Activated naive CD4-positive, alpha-beta T cell treated with anti-CD3 and anti-CD28 coated beads for 36 hours (primary cell): ENCODE measurements at regions of chr11 and their contacts with region 1.

Region 1: DNA sequence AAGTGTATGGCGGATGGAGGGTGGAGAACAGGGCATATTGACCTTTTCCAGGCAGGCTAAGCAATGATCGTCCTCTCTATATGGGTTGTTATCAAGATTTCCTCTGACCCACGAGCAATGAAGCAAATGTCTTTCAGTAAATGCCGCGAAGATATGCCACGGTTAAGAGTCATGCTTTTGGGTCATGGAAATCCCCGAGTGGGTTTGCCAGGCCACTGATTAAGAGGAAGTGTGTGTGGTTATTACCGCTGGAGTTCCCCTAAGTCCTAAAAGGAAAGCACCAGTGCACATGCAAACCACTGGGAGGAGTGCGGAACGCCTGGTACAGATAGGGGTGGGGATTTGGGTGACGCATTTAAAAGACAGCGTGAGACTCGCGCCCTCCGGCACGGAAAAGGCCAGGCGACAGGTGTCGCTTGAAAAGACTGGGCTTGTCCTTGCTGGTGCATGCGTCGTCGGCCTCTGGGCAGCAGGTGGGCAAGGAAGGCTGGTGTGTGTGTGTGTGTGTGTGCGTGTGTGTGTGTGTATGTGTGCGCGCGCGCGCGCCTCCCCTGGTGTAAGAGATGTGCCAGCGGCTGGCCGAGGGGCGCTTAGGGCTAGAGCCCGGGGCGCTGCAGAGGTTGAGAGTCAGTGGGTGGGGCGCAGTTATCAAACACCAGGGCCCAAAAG is at the start of gene BIRC3:
- DNase-seq: peak; percentile 97
- H3K4me3 Mint-ChIP-seq: peak within 1 kb of the TSS; percentile 96
- H3K27ac Mint-ChIP-seq: peak within 1 kb of the TSS; percentile 98
- H3K4me1 Mint-ChIP-seq: peaks cover 66% of the 10 kb centered on the region
- H3K27me3 Mint-ChIP-seq: no peaks in the 10 kb centered on the region
- total RNA-seq, gene BIRC3: 100 to 105 TPM

Region 2: DNA sequence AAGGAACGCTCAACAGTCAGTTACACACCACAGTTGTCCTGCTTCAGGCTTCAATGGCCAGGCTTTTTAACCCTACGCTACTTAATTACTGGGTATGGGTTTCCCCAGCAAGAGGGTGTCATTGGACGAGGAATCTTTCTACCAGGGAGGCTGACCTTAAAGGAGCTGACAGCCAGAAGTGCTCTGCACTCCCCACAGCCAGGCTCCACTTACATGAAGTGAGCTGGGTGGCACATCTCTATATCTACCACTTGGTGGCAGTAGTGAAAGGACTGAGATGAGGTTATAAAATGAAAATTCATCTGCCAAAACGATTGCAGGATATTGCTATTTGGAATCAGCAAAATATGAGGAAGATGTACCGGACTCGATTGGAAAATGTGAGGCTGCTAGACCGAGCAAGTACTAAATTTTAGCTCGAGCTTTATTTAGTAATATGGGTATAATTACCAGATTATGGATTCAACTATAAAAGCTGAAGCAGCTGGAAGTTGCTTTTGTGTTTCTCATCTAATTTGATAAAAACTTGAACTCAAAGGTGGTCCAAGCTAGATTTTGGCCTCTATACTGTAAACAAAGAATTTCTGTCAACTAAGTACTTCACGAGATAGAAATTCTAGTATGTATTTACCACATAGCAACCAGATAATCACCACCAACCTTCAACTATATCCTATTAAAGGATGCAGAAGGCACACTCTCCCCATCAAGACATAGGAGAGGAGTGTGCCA is 456.4 kb before region 1 on chr11:
- CTCF ChIA-PET with region 1: no interaction called
- intact Hi-C with region 1: no loop called
- DNase-seq: peak; percentile 37
- H3K4me3 Mint-ChIP-seq: no peak overlapping the region
- H3K27ac Mint-ChIP-seq: no peak overlapping the region
- H3K4me1 Mint-ChIP-seq: no peaks in the 10 kb centered on the region
- H3K27me3 Mint-ChIP-seq: peaks cover 8% of the 10 kb centered on the region

Region 3: DNA sequence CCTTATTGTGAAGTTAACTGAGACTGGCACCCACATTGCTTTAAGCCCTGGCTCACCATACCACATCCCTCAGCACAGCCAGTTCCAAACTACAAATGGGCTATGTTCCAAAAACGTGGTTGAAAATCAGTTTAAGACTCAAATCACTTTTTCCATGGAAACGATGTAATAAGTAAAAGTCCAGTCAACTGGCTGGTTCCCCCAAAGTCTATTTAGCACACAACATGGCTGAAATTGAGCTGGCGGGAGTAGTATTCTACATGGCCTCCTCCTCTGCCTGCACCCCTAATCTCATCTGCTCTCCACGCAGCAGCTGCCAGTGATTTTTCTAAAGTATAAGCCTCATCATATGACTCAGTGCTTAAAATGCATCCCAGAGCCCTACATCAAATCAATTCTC is 40.9 kb before region 1 on chr11:
- CTCF ChIA-PET with region 1: no interaction called
- intact Hi-C with region 1: no loop called
- DNase-seq: no peak
- H3K4me3 Mint-ChIP-seq: no peak overlapping the region
- H3K27ac Mint-ChIP-seq: no peak overlapping the region
- H3K4me1 Mint-ChIP-seq: peaks cover 10% of the 10 kb centered on the region
- H3K27me3 Mint-ChIP-seq: peaks cover 6% of the 10 kb centered on the region

Region 4: GRCh38 chr11:102293873-102294601 is 23.2 kb before region 1 on chr11:
- CTCF ChIA-PET with region 1: interaction called, 180 read pairs
- intact Hi-C with region 1: loop called (anchors 1 kb)
- DNase-seq: peak; percentile 35
- H3K4me3 Mint-ChIP-seq: peak overlapping the region; percentile 74
- H3K27ac Mint-ChIP-seq: peak overlapping the region; percentile 85
- H3K4me1 Mint-ChIP-seq: peaks cover 21% of the 10 kb centered on the region
- H3K27me3 Mint-ChIP-seq: no peaks in the 10 kb centered on the region

Region 5: GRCh38 chr11:102306048-102306585 is 11.1 kb before region 1 on chr11:
- CTCF ChIA-PET with region 1: interaction called, 180 read pairs
- intact Hi-C with region 1: loop called (anchors 1 kb)
- DNase-seq: peak; percentile 37
- H3K4me3 Mint-ChIP-seq: peak overlapping the region; percentile 36
- H3K27ac Mint-ChIP-seq: peak overlapping the region; percentile 74
- H3K4me1 Mint-ChIP-seq: peaks cover 59% of the 10 kb centered on the region
- H3K27me3 Mint-ChIP-seq: no peaks in the 10 kb centered on the region

Region 6: DNA sequence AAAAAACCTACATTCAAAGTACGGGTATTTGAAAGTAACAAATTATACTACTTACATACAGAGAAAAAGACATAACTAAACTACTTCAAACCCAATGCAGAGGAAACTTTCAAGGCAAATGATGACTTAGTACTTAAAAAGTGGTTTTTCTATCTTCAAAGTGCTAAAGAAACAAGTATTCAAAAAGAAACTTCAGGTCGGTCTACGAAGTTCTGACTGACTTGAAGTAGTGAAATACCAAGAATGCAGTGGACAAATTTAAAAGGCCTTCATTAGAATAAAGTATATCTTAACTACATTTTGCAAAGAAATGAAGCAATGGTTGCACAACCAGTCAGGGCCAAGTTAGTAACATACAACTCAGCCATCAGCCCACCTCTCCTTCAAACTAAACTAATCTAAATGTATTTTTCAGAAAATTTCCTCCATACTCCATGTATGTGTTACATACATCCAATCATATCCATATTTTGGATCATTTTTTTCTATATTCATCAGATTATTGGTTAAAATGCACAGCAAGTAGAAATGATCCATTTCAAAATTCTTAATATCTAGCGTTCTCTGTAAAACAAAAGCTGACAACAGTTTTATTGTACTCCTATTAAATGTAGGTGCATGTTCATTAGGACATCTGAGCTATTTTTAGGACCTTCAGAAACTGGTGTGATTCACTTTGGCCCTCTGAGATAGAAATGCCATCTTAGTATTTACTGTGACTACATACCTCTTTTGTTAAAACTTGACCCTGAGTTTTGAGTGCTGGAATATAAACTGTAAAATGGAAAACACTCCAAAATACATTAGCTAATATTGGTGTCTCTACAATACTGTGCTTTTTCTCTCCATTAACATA is 79.7 kb after region 1 on chr11:
- CTCF ChIA-PET with region 1: interaction called, 4 read pairs
- intact Hi-C with region 1: loop called (anchors 1 kb)
- DNase-seq: no peak
- H3K4me3 Mint-ChIP-seq: no peak overlapping the region
- H3K27ac Mint-ChIP-seq: peak overlapping the region; percentile 63
- H3K4me1 Mint-ChIP-seq: peaks cover 48% of the 10 kb centered on the region
- H3K27me3 Mint-ChIP-seq: no peaks in the 10 kb centered on the region

Region 7: DNA sequence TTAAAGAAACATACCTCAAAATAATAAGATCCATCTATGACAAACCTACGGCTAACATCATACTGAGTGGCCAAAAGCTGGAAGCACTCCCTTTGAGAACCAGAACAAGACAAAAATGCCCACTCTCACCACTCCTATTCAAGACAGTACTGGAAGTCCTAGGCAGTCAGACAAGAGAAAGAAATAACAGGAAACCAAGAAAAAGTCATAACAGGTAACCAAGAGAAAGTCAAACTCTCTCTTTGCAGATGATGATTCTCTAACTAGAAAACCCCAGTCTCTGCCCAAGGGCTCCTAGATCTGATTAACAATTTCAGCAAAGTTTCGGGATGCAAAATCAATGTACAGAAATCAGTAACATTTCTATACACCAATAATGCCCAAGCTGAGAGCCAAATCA is 99.7 kb after region 1 on chr11:
- CTCF ChIA-PET with region 1: no interaction called
- intact Hi-C with region 1: loop called (anchors 1 kb)
- DNase-seq: peak; percentile 38
- H3K4me3 Mint-ChIP-seq: peak overlapping the region; percentile 34
- H3K27ac Mint-ChIP-seq: peak overlapping the region; percentile 84
- H3K4me1 Mint-ChIP-seq: peaks cover 92% of the 10 kb centered on the region
- H3K27me3 Mint-ChIP-seq: no peaks in the 10 kb centered on the region

Region 8: DNA sequence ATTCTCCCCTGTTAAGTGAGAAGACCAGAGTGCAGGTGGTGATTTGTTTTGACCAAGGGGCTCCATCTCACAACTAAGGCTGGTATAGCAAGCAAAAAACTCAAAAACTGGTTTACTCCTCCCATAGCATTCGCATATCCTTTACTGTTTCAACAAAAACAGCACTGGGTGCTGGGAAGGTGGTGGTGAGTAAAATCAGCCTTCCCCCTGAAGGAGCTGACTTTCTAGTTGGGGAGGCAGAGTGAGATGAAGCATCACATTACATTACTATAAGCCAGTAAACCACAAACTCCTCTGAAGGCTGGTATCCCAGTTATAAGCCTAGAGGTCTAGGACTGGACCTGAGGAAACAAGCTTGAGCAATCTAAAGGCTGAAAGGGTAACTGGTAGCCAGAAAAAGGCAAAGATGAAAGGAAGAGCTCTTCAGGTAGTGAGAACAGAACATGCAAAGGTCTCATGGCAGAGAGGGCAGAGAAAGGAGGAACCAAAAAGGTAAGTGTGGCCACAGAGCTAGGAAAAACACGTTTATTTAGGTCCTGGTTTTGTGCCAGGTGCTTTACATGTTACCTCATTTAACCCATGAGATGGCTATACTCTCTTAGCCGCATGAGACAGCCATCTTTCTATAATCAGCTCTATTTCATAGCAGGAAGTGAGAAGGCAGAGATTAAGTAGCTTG is 113.1 kb after region 1 on chr11:
- CTCF ChIA-PET with region 1: interaction called, 3 read pairs
- intact Hi-C with region 1: loop called (anchors 1 kb)
- DNase-seq: peak; percentile 86
- H3K4me3 Mint-ChIP-seq: peak overlapping the region; percentile 44
- H3K27ac Mint-ChIP-seq: peak overlapping the region; percentile 95
- H3K4me1 Mint-ChIP-seq: peaks cover 75% of the 10 kb centered on the region
- H3K27me3 Mint-ChIP-seq: no peaks in the 10 kb centered on the region

Region 9: GRCh38 chr11:102599642-102600261 is 282.5 kb after region 1 on chr11:
- CTCF ChIA-PET with region 1: no interaction called
- intact Hi-C with region 1: loop called (anchors 1 kb)
- DNase-seq: peak; percentile 43
- H3K4me3 Mint-ChIP-seq: no peak overlapping the region
- H3K27ac Mint-ChIP-seq: peak overlapping the region; percentile 75
- H3K4me1 Mint-ChIP-seq: peaks cover 27% of the 10 kb centered on the region
- H3K27me3 Mint-ChIP-seq: no peaks in the 10 kb centered on the region